Ovary (tissue), 10 donors: ENCODE measurements at regions of chr1 and their contacts with region 1.

Region 1: DNA sequence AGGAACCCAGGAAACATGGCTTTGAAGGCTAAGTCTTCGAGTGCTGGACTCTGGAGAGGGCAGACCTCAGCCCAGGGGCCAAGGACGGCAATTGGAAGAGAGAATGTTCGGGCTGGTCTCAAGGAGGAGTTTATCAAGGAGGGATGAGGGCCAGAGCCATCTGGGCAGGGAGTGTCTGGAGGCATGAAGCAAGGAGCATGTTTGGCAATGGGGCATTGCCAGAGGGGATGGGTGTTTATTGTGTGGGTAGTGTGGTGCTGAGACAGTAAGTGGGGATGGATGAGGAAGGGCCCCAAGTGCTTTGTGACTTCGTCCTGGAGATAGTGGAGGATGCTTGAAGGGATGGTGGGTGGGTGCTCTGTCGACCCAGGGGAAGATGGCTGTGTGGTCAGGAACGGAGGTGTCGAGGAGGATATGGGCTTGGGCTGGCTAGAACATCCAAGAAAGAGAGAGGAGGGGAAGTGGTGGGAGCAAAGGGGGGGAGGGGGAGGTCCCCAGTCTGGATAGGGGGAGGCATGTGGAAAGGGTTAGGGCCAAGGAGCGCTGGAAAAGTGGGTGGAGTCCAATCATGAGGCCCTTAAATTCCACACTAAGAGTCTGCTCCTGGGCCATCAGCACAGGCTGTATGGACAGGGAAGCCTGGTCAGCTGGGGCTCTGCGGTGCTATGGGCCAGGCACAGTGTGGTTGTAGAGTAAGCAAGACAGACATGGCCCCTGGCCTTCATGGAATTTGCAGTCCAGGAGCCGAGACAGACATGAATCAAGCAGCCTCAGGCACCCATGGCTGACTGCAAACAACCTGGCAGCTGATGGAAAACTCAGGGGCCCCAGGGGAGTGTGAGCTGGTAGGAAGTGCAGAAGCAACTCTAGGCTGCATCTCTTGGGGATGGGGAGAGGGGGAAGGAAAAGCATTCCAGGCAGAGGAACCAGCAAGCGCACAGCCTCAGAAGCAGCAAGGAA is 36.4 kb downstream of the EDN2 start:
- DNase-seq: no peak
- H3K4me3 ChIP-seq: no peak overlapping the region
- H3K27ac ChIP-seq: no peak overlapping the region
- H3K4me1 ChIP-seq: peaks cover 2% of the 10 kb centered on the region
- H3K27me3 ChIP-seq: no peaks in the 10 kb centered on the region
- CTCF ChIP-seq: no peak
- EP300 ChIP-seq: no peak
- POLR2A ChIP-seq: no peak

Region 2: GRCh38 chr1:41013796-41014195 is 434.3 kb before region 1 on chr1:
- intact Hi-C with region 1: no loop called
- DNase-seq: no peak
- H3K4me3 ChIP-seq: no peak overlapping the region
- H3K27ac ChIP-seq: no peak overlapping the region
- H3K4me1 ChIP-seq: no peaks in the 10 kb centered on the region
- H3K27me3 ChIP-seq: no peaks in the 10 kb centered on the region
- CTCF ChIP-seq: no peak
- EP300 ChIP-seq: no peak
- POLR2A ChIP-seq: no peak

Region 3: GRCh38 chr1:41734201-41734970 is 286.3 kb after region 1 on chr1:
- intact Hi-C with region 1: loop called in 1 of 4 experiments (anchors 1 kb)
- DNase-seq: no peak
- H3K4me3 ChIP-seq: no peak overlapping the region
- H3K27ac ChIP-seq: no peak overlapping the region
- H3K4me1 ChIP-seq: no peaks in the 10 kb centered on the region
- H3K27me3 ChIP-seq: no peaks in the 10 kb centered on the region
- CTCF ChIP-seq: no peak
- EP300 ChIP-seq: no peak
- POLR2A ChIP-seq: no peak